GM10248 (cell line): ENCODE measurements at regions of chr17 and their contacts with region 1.

Region 1: GRCh38 chr17:46836500-46836899 is 14.9 kb upstream of the WNT9B start:
- DNase-seq: no peak
- CTCF ChIP-seq: no peak

Region 2: GRCh38 chr17:46822388-46822921 is 14.0 kb before region 1 on chr17:
- CTCF ChIA-PET with region 1: interaction called, 22 read pairs
- POLR2A ChIA-PET with region 1: no interaction called
- DNase-seq: peak; percentile 57
- CTCF ChIP-seq: peak; percentile 67